ENCODE measurements at regions of chr19 and their contacts with region 1.

Region 1: DNA sequence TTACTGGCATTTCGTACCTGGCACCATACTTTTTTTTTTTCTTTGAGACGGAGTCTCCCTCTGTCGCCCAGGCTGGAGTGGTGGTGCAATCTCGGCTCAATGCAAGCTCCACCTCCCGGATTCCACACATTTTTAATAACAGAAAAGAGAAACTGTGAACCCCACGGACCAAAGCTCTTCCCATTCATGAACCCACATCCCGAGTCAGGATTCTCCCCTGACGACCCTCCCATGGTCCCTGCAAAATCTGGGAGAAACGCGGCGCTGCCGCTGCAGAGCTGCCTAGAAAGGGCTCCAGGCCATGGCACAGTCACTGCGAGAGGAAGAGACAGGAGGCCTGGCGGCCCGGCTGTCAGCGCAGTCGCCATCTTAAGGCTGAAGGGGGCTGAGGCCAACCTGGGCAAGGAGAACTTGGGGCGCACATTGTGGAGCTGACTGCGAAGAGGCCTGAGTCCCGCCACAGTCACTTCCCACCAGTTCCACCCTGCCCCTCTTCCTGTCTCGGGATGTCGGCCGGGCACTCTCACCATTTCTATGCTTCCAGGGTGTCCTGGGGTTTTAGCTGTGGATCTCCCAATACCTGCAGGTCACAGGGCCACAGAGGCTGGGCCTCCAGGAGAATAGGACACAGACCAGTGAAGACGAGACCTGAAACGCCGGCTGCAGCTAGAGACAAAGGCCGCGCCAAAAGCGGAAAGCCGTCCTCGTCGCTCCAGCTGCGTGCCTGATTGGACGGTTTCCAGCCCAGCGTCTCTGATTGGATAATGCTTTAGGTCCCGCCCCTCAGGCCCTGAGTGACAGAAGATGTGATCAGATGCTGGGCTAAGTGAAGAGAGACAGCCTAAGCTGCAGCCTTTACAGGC is 71.0 kb downstream of the ZNF486 start:
- DNase-seq: peak; percentile 96
- H3K4me3 Mint-ChIP-seq: peak overlapping the region; percentile 98
- H3K27ac Mint-ChIP-seq: peak overlapping the region; percentile 84
- H3K4me1 Mint-ChIP-seq: peaks cover 7% of the 10 kb centered on the region
- H3K27me3 Mint-ChIP-seq: no peaks in the 10 kb centered on the region

Region 2: DNA sequence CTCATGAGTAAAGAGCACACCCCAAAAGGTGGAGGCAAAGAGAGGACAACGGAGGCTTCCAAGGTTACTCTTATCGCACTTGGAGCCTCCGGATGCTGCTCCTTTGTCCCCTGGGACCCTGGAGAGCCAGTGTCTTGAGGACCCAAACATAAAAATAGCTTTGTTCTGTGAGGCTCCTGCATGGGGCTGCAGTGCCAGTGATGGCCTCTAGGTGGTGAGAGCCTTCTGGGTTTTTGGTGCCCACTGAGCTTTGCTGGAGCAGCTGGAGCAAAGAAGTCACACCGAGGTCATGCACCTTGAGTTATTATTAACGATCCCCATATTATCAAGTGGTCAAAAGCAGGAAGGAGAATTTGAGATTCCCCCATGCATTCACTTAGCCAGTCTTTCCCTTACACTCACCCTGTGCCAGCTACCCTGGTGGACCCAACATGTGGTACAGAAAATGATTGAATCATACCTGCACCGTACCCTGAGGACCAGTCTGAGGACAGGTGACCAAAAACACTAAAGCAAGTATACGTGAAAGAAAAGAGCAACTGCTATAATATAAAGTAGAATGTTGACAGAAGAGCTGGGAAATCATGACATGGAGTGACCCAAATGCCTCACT is 240.2 kb before region 1 on chr19:
- CTCF ChIA-PET with region 1: interaction called, 11 read pairs
- POLR2A ChIA-PET with region 1: no interaction called
- intact Hi-C with region 1: loop called (anchors 5 kb)
- DNase-seq: peak; percentile 66
- H3K4me3 Mint-ChIP-seq: no peak overlapping the region
- H3K27ac Mint-ChIP-seq: no peak overlapping the region
- H3K4me1 Mint-ChIP-seq: no peaks in the 10 kb centered on the region
- H3K27me3 Mint-ChIP-seq: no peaks in the 10 kb centered on the region

Region 3: GRCh38 chr19:20039203-20039723 is 198.7 kb before region 1 on chr19 and contains the start of gene ZNF682:
- CTCF ChIA-PET with region 1: interaction called, 3 read pairs
- POLR2A ChIA-PET with region 1: no interaction called
- intact Hi-C with region 1: loop called (anchors 5 kb)
- DNase-seq: peak; percentile 97
- H3K4me3 Mint-ChIP-seq: peak within 1 kb of the TSS; percentile 96
- H3K27ac Mint-ChIP-seq: peak within 1 kb of the TSS; percentile 91
- H3K4me1 Mint-ChIP-seq: peaks cover 12% of the 10 kb centered on the region
- H3K27me3 Mint-ChIP-seq: no peaks in the 10 kb centered on the region
- total RNA-seq, gene ZNF682: 7.0 to 9.1 TPM

Region 4: DNA sequence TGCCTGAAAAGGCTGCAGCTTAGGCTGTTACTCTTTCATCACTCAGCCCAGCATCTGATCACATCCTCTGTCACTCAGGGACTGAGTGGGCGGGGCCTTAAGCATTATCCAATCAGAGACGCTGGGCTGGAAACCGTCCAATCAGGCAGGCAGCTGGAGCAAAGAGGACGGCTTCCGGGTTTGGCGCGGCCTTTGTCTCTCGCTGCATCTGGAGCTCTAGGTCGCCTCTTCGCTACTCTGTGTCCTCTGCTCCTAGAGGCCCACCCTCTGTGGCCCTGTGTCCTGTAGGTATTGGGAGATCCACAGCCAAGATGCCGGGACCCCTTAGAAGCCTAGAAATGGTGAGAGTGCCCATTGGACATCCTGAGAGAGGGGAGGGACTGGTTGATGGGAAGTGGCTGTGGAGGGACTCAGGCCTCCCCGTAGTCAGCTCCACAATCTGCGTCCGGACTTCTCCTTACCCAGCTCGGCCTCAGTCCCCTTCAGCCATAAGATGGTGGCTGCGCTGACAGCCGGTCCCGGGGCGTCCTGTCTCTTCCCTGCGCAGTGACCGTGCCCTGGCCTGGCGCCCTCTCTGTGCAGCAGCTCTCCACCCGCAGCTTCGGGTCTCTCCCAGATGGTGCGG is 70.9 kb before region 1 on chr19 and contains the start of gene ZNF486:
- CTCF ChIA-PET with region 1: interaction called, 3 read pairs
- POLR2A ChIA-PET with region 1: interaction called, 12 read pairs
- intact Hi-C with region 1: loop called (anchors 5 kb)
- DNase-seq: peak; percentile 97
- H3K4me3 Mint-ChIP-seq: peak within 1 kb of the TSS; percentile 98
- H3K27ac Mint-ChIP-seq: peak within 1 kb of the TSS; percentile 92
- H3K4me1 Mint-ChIP-seq: peaks cover 45% of the 10 kb centered on the region
- H3K27me3 Mint-ChIP-seq: no peaks in the 10 kb centered on the region
- total RNA-seq, gene ZNF486: 12.5 to 12.9 TPM

Region 5: GRCh38 chr19:20321139-20321763 is 83.3 kb after region 1 on chr19:
- CTCF ChIA-PET with region 1: no interaction called
- POLR2A ChIA-PET with region 1: no interaction called
- intact Hi-C with region 1: no loop called
- DNase-seq: no peak
- H3K4me3 Mint-ChIP-seq: no peak overlapping the region
- H3K27ac Mint-ChIP-seq: no peak overlapping the region
- H3K4me1 Mint-ChIP-seq: peaks cover 8% of the 10 kb centered on the region
- H3K27me3 Mint-ChIP-seq: no peaks in the 10 kb centered on the region

Region 6: DNA sequence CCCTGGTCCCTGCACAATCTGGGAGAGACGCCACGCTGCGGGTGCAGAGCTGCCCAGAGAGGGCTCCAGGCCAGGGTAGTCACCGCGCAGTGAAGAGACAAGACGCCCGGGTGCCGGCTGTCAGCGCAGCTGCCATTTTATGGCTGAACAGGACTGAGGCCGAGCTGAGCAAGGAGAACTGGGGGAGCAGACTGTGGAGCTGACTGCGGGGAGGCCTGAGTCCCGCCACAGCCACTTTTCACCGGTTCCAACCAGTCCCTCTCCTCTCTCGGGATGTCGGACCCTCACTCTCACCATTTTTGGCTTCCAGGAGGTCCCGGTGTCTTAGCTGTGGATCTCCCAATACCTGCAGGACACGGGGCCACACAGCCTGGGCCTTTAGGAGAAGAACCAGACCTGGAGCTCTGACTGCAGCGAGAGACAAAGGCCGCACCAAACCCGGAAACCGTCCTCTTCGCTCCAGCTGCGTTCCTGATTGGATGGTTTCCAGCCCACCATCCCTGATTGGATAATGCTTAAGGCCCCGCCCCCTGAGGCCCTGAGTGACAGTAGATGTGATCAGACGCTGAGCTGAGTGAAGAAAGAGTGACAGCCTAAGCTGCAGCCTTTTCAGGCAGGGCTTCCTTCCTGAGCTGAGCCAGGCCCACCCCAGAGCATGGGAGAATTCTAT is 423.3 kb after region 1 on chr19 and contains the start of gene ZNF626:
- CTCF ChIA-PET with region 1: no interaction called
- POLR2A ChIA-PET with region 1: no interaction called
- intact Hi-C with region 1: loop called (anchors 5 kb)
- DNase-seq: peak; percentile 96
- H3K4me3 Mint-ChIP-seq: peak within 1 kb of the TSS; percentile 91
- H3K27ac Mint-ChIP-seq: peak within 1 kb of the TSS; percentile 90
- H3K4me1 Mint-ChIP-seq: peaks cover 43% of the 10 kb centered on the region
- H3K27me3 Mint-ChIP-seq: no peaks in the 10 kb centered on the region
- total RNA-seq, gene ZNF626: 8.7 to 12.5 TPM

Region 7: DNA sequence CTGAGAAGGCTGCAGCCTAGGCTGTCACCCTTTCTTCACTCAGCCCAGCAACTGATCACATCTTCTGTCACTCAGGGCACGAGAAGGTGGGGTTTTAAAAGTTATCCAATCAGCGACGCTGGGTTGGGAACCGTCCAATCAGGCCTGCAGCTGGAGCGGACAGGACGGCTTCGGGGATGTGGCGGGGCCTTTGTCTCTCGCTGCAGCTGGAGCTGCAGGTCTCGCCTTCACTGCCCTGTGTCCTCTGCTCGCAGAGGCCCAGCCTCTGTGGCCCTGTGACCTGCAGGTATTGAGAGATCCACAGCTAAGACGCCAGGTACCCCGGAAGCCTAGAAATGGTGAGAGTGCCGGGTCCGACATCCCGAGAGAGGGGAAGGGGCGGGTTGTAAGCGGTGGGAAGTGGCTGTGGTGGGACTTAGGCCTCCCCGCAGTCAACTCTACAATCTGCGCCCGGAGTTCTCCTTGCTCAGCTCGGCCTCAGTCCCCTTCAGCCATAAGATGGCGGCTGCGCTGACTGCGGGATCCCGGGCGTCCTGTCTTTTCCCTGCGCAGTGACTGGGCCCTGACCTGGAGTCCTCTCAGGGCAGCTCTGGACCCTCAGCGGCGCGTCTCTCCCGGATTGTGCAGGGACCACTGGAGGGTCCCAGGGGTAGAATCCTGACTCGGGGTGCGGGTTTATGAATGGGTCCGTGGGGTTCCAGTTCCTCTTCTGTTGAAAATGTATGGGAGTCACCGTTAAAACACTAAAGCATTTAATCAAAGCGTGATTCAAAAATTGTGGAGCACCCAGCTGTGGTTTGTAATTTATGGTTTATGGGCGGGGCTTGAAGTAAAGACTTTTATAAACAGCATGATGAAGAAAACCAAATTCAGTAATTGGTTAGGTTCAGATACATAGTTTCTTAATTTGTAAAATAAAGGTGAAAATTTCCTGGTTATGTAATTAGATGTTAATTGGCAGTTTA is 844.3 kb after region 1 on chr19 and contains the start of gene ZNF714:
- CTCF ChIA-PET with region 1: no interaction called
- POLR2A ChIA-PET with region 1: no interaction called
- intact Hi-C with region 1: loop called (anchors 5 kb)
- DNase-seq: peak; percentile 91
- H3K4me3 Mint-ChIP-seq: peak within 1 kb of the TSS; percentile 100
- H3K27ac Mint-ChIP-seq: peak within 1 kb of the TSS; percentile 94
- H3K4me1 Mint-ChIP-seq: peaks cover 31% of the 10 kb centered on the region
- H3K27me3 Mint-ChIP-seq: no peaks in the 10 kb centered on the region
- total RNA-seq, gene ZNF714: 17.9 to 18.0 TPM